T-cell (primary cell): ENCODE measurements at regions of chr1 and their contacts with region 1.

Region 1: DNA sequence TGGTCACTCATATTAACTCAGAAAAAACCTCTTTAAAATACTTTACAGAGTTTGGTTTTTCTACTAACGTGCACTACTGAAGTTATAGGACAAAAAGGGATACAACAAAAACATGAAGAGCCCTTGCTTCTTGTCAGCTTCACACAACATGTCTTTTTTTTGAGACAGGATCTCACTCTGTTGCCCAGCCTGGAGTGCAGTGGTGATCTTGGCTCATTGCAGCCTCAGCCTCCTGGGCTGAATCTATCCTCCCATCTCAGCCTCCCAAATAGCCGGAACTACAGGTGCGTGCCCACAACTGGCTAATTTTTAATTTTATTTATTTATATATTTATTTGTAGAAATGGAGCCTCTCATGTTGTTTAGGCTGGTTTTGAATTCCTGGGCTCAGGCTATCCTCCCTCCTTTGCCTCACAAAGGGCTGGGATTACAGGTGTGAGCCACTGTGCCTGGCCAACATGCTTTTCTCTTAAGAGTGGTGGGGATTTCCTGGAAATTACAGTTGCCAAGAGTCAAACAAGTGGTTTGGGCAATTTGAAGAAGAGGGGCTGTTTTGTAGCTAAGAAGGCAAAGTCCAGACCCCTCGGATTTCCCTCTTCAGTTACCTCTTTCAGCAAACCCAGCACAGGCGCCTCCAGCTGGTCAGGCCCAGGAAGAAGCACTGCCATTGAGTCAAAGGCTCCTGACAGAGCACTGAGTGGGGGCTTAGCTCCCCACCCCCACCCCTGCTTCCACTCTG is 6.4 kb upstream of the SMPDL3B start:
- DNase-seq: no peak
- ATAC-seq: no peak
- H3K4me3 ChIP-seq: no peak overlapping the region
- H3K4me3 Mint-ChIP-seq: no peak overlapping the region
- H3K27ac ChIP-seq: no peak overlapping the region
- H3K27ac Mint-ChIP-seq: no peak overlapping the region
- H3K4me1 ChIP-seq: no peaks in the 10 kb centered on the region
- H3K4me1 Mint-ChIP-seq: peaks cover 0 to 7% (median 3%) of the 10 kb centered on the region in 3 donors
- H3K27me3 ChIP-seq: peaks cover 0 to 2% of the 10 kb centered on the region in 2 experiments
- H3K27me3 Mint-ChIP-seq: no peaks in the 10 kb centered on the region

Region 2: GRCh38 chr1:27959400-27960217 is 31.2 kb after region 1 on chr1 and contains the start of gene XKR8:
- CTCF ChIA-PET with region 1: no interaction called
- POLR2A ChIA-PET with region 1: no interaction called
- DNase-seq: peak; percentile 71 to 90 (median 81)
- ATAC-seq: peak; percentile 99
- H3K4me3 ChIP-seq: peak within 1 kb of the TSS; percentile 69 to 77
- H3K4me3 Mint-ChIP-seq: peak within 1 kb of the TSS; percentile 84 to 87 (median 84)
- H3K27ac ChIP-seq: peak within 1 kb of the TSS; percentile 67
- H3K27ac Mint-ChIP-seq: peak within 1 kb of the TSS; percentile 92 to 94
- H3K4me1 ChIP-seq: peaks cover 5 to 32% of the 10 kb centered on the region in 2 experiments
- H3K4me1 Mint-ChIP-seq: peaks cover 29 to 32% (median 32%) of the 10 kb centered on the region in 3 donors
- H3K27me3 ChIP-seq: peaks cover 0 to 11% of the 10 kb centered on the region in 2 experiments
- H3K27me3 Mint-ChIP-seq: no peaks in the 10 kb centered on the region
- total RNA-seq, gene XKR8: 7.7 to 18.3 (median 14.4) TPM

Region 3: DNA sequence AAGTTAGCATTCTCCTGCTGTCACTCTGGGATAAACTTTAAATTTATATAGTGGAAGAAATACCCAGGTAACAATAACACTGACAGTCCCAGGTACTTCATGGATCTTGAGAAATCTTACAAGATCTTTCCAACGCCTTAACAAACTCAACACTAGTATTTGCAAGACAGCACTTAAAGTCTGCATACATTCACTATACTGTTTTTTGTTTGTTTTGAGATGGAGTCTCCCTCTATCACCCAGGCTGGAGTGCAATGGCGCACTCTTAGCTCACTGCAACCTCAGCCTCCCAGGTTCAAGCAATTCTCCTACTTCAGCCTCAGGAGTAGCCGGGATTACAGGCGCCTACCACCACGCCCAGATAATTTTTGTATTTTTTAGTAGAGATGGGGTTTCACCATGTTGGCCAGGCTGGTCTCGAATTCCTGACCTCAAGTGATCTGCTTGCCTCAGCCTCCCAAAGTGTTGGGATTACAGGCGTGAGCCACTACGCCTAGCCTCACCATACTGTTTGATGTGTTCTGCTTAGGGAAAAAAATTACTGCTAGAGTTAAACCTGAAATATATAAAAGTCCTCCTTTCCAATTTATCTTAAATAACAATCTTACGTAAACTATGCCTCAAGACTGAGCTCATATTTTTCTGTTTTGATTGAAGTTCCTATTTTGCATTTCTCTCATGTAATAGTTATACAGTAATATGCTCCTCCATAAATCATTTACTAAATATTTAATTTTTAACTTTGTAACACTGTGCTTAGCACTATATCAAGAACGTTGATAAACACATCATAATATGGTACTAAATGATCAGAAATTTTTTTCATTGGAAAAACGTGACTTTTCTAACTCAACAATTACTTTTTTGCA is 142.6 kb after region 1 on chr1:
- CTCF ChIA-PET with region 1: no interaction called
- POLR2A ChIA-PET with region 1: no interaction called
- DNase-seq: no peak
- ATAC-seq: no peak
- H3K4me3 ChIP-seq: no peak overlapping the region
- H3K4me3 Mint-ChIP-seq: no peak overlapping the region
- H3K27ac ChIP-seq: no peak overlapping the region
- H3K27ac Mint-ChIP-seq: no peak overlapping the region
- H3K4me1 ChIP-seq: no peaks in the 10 kb centered on the region
- H3K4me1 Mint-ChIP-seq: peaks cover 32 to 47% (median 43%) of the 10 kb centered on the region in 3 donors
- H3K27me3 ChIP-seq: no peaks in the 10 kb centered on the region
- H3K27me3 Mint-ChIP-seq: no peaks in the 10 kb centered on the region

Region 4: GRCh38 chr1:28354121-28354520 is 425.7 kb after region 1 on chr1:
- CTCF ChIA-PET with region 1: no interaction called
- POLR2A ChIA-PET with region 1: interaction called in 1 of 2 experiments, 17 read pairs
- DNase-seq: no peak
- ATAC-seq: no peak
- H3K4me3 ChIP-seq: no peak overlapping the region
- H3K4me3 Mint-ChIP-seq: no peak overlapping the region
- H3K27ac ChIP-seq: no peak overlapping the region
- H3K27ac Mint-ChIP-seq: no peak overlapping the region
- H3K4me1 ChIP-seq: no peaks in the 10 kb centered on the region
- H3K4me1 Mint-ChIP-seq: no peaks in the 10 kb centered on the region
- H3K27me3 ChIP-seq: no peaks in the 10 kb centered on the region
- H3K27me3 Mint-ChIP-seq: no peaks in the 10 kb centered on the region